CD14-positive monocyte (primary cell): ENCODE measurements at regions of chr2 and their contacts with region 1.

Region 1: GRCh38 chr2:74778381-74779264 is 55.3 kb upstream of the HK2 start:
- DNase-seq: no peak
- H3K4me3 ChIP-seq: no peak overlapping the region
- H3K4me3 Mint-ChIP-seq: no peak overlapping the region
- H3K27ac ChIP-seq: no peak overlapping the region
- H3K27ac Mint-ChIP-seq: no peak overlapping the region
- H3K4me1 ChIP-seq: peaks cover 8 to 12% of the 10 kb centered on the region in 2 donors
- H3K4me1 Mint-ChIP-seq: peaks cover 17% of the 10 kb centered on the region
- H3K27me3 ChIP-seq: no peaks in the 10 kb centered on the region
- H3K27me3 Mint-ChIP-seq: peaks cover 1 to 6% (median 4%) of the 10 kb centered on the region in 3 donors
- CTCF ChIP-seq: no peak

Region 2: DNA sequence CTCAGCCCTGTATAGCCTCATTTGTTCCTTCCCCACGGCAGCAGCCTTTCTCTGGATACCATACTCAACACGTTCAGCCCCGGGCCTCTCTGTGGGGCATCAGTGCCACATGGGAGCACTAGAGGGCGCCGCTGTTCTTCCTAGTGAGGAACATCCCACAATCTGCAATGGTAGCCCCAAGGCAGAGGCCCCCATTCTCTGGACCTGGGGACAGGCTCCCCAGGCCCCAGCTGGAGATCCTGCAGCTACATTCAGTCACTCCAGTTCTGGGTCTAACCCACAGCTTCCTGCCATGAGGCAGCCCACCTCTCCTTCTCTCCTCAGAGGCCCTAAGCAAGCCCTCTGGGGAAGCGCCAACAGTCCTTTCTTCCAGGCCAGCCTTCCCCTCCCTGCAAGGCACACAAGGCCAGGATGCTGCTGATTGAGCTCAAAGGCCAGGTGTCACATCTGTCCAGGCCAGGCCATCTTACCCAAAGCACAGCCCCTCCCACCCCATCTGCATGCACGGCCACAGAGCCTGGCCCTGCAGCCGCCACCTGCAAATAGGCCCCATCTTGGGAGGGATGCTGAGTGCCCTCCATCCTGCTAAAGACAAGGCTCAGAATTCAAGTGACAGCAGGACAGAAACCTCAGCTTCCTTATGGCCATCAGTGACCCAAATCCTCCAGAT is 1692.8 kb before region 1 on chr2:
- intact Hi-C with region 1: loop called in 1 of 2 experiments (anchors 10 kb)
- DNase-seq: peak; percentile 55 to 75 (median 71)
- H3K4me3 ChIP-seq: no peak overlapping the region
- H3K4me3 Mint-ChIP-seq: no peak overlapping the region
- H3K27ac ChIP-seq: no peak overlapping the region
- H3K27ac Mint-ChIP-seq: no peak overlapping the region
- H3K4me1 ChIP-seq: no peaks in the 10 kb centered on the region
- H3K4me1 Mint-ChIP-seq: peaks cover 2% of the 10 kb centered on the region
- H3K27me3 ChIP-seq: no peaks in the 10 kb centered on the region
- H3K27me3 Mint-ChIP-seq: peaks cover under 1 to 7% (median 1%) of the 10 kb centered on the region in 3 donors
- CTCF ChIP-seq: peak; percentile 94

Region 3: DNA sequence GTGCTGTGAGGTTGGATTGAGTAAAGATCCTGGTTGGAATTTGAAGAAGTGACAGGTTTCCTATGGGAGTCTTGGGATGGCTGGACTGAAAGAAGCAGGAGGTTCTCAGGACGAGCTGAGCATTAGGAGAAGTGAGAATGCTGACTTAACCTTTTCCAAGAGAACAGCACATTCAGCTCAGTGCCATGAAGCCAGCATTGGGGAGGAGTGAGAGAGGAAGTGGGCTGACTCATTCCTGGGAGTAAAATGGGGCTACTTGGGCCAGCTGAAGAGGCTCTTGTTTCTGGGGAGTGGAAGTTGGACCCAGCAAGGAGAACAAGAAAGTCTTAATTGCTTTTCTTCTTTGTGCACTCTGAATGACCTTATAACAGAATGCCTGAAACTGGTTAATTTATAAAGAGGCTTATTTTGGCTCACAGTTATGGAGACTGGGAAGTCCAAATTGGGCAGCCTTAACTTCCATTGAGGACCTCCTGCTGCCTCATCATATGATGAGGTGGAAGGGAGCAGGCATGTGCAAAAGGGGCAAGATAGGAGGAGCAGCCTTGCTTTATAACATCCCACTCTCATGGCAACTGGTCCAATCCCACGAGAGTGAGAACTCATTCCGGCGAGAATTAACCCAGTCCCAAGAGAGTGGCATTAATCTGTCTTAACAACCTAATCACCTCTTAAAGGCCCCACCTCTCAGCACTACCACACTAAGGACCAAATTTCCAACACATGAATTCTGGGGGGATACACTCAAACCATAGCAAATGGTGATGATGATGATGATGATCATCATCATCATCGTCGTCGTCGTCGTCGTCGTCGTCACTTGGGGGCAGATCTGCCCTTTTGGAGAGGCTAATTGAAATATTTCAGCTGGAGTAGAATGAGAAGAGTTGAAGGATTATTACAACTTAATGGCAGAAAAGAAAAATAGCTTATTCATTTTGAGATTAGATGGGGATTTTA is 825.8 kb before region 1 on chr2:
- intact Hi-C with region 1: no loop called
- DNase-seq: peak; percentile 72 to 89 (median 82)
- H3K4me3 ChIP-seq: peak overlapping the region in 1 of 3 experiments; percentile 13
- H3K4me3 Mint-ChIP-seq: peak overlapping the region in 1 of 2 donors; percentile 65
- H3K27ac ChIP-seq: peak overlapping the region; percentile 39 to 64
- H3K27ac Mint-ChIP-seq: peak overlapping the region; percentile 79 to 91 (median 82)
- H3K4me1 ChIP-seq: peaks cover 57 to 58% of the 10 kb centered on the region in 2 donors
- H3K4me1 Mint-ChIP-seq: peaks cover 57% of the 10 kb centered on the region
- H3K27me3 ChIP-seq: no peaks in the 10 kb centered on the region
- H3K27me3 Mint-ChIP-seq: no peaks in the 10 kb centered on the region
- CTCF ChIP-seq: no peak

Region 4: DNA sequence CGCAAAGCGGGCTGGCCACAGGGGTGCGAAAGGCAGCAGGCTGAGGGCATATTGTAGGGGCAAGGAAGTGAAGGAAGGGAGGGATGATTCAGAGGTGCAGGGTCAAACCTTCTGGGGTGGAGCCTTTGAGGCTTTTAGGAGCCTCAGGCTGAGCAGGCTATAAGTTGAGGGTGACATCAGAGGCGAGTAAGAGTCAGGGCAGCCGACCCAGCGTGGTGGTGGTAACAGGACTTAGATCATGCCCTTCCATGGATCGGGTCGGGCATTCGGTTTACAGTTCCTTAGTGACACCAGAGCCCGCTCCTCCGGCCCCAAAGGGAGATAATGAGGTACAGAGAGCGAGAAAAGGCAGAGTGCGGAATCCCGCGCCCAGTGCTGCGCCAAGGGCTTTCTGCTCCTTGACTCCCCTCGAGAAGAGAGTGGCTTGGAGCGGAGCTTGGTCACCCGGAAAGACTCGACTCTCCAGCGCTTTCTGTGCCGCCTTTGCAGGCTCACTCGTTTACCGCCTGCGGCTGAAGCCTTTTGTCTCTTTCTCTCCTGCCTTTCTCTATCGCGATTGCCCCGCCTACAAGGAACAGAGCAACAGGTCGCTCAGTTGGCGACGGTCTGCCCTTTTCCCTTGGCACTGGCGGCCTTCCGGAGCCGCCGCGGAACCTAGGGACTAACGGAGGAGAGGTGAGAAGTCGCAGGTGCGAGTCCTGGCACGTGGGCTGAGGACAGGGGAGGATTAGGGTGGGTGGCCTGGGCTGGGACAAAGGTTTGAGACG is 279.9 kb before region 1 on chr2:
- intact Hi-C with region 1: no loop called
- DNase-seq: peak in 2 of 3 donors; percentile 39 to 48
- H3K4me3 ChIP-seq: peak overlapping the region; percentile 29 to 79 (median 35)
- H3K4me3 Mint-ChIP-seq: peak overlapping the region; percentile 76 to 97
- H3K27ac ChIP-seq: no peak overlapping the region
- H3K27ac Mint-ChIP-seq: peak overlapping the region in 1 of 7 donors; percentile 3
- H3K4me1 ChIP-seq: peaks cover 41 to 46% of the 10 kb centered on the region in 2 donors
- H3K4me1 Mint-ChIP-seq: peaks cover 43% of the 10 kb centered on the region
- H3K27me3 ChIP-seq: peaks cover 51 to 66% of the 10 kb centered on the region in 2 donors
- H3K27me3 Mint-ChIP-seq: peaks cover 62 to 77% (median 64%) of the 10 kb centered on the region in 3 donors
- CTCF ChIP-seq: no peak

Region 5: GRCh38 chr2:74619651-74620297 is 158.8 kb before region 1 on chr2:
- intact Hi-C with region 1: no loop called
- DNase-seq: peak; percentile 14 to 50 (median 40)
- H3K4me3 ChIP-seq: peak overlapping the region in 1 of 3 experiments; percentile 41
- H3K4me3 Mint-ChIP-seq: peak overlapping the region in 1 of 2 donors; percentile 35
- H3K27ac ChIP-seq: peak overlapping the region in 1 of 2 donors; percentile 62
- H3K27ac Mint-ChIP-seq: peak overlapping the region; percentile 14 to 86 (median 35)
- H3K4me1 ChIP-seq: peaks cover 19 to 20% of the 10 kb centered on the region in 2 donors
- H3K4me1 Mint-ChIP-seq: peaks cover 21% of the 10 kb centered on the region
- H3K27me3 ChIP-seq: no peaks in the 10 kb centered on the region
- H3K27me3 Mint-ChIP-seq: peaks cover 2 to 4% (median 3%) of the 10 kb centered on the region in 3 donors
- CTCF ChIP-seq: no peak